ENCODE measurements at regions of chr20 and their contacts with region 1.

Region 1: DNA sequence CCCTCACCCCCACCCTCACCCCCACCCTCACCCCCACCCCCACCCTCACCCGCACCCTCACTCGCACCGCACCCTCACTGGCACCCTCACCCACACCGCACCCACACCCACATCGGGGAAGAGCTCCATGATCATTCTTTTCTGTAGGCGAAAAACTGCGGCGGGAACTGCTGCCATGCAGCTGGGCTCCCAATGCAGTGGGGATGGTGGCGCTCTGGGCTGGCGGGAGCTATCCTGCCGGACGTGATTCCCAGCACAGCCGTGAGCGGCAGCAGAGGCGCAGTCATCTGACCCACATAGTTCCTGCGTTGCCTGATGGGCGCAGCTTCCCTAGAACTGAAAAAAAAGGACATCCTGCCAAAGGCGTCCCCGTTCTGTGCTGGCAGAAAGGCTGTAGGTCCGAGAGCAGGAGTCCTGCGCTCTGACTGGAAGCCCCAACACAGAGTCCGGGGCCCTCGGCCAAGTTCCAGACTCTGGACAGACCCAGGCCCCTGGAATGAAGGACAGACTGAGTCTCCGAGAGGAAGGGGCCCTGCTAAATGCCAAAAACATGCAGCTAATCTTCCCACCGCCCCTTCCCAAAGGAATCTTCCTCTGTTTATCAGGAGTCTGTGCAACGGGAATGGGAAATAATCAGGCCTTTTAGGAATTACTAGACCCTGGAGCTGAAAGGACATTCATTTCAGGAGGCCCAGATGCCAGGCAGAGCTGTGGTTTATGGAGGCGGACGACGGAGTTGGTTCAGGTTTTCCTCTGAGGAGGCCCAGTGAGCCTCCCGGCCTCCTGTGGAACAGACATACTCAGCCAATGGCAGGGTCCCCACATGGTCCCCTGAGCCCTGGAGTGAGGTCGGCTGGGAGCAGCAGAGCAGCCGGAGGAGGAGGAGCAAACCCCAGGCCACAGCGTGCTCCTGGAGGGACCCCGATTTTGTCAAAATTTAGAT is 14.1 kb upstream of the TCFL5 start:
- DNase-seq: peak; percentile 92
- ATAC-seq: peak; percentile 85
- H3K4me3 ChIP-seq: peak overlapping the region; percentile 8 to 53 (median 13); a peak in 5 of 6 replicates
- H3K27ac ChIP-seq: peak overlapping the region; percentile 48
- H3K4me1 ChIP-seq: peaks cover 67% of the 10 kb centered on the region
- H3K27me3 ChIP-seq: peaks cover 0 to 6% of the 10 kb centered on the region in 2 experiments; a peak in 2 of 5 replicates
- CTCF ChIP-seq: peak; percentile 92
- EP300 ChIP-seq: peak in 1 of 2 experiments; percentile 57; a peak in 1 of 4 replicates
- POLR2A ChIP-seq: peak in 1 of 2 experiments; percentile 59; a peak in 2 of 4 replicates
- RAD21 ChIP-seq: peak; percentile 82

Region 2: DNA sequence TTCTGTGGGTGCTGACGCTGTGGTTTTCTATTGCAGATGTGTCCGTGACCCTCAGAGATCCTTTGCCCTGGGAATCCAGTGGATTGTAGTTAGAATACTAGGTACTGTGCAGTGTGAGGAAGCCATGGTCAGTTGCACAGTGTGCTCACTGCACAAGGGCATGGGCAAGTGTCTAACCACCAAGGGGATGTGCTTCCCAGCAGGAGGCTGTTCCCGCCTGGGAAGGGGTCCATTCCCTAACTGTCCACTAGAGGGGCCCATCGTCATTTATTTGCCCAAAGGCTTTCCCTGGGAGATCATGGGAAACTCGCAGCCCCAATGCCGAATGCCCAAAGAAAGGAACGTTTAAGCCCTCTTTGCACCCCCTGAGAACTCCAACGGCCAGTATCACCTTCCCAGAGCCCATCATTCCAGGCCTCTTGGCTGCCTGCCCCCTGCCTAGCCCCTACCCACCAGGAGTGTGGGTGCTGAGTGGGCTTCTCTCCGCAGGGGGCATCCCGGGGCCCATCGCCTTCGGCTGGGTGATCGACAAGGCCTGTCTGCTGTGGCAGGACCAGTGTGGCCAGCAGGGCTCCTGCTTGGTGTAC is 207.2 kb before region 1 on chr20:
- CTCF ChIA-PET with region 1: no interaction called
- POLR2A ChIA-PET with region 1: interaction called, 3 read pairs
- in situ Hi-C with region 1: no loop called
- intact Hi-C with region 1: loop called (anchors 5 kb)
- DNase-seq: peak; percentile 82
- ATAC-seq: peak; percentile 41
- H3K4me3 ChIP-seq: peak overlapping the region in 2 of 3 experiments; percentile 44 to 59; a peak in 3 of 6 replicates
- H3K27ac ChIP-seq: no peak overlapping the region
- H3K4me1 ChIP-seq: peaks cover 61% of the 10 kb centered on the region
- H3K27me3 ChIP-seq: no peaks in the 10 kb centered on the region
- CTCF ChIP-seq: peak; percentile 98
- EP300 ChIP-seq: no peak
- POLR2A ChIP-seq: no peak; a peak in 1 of 4 replicates
- RAD21 ChIP-seq: peak; percentile 93

Region 3: DNA sequence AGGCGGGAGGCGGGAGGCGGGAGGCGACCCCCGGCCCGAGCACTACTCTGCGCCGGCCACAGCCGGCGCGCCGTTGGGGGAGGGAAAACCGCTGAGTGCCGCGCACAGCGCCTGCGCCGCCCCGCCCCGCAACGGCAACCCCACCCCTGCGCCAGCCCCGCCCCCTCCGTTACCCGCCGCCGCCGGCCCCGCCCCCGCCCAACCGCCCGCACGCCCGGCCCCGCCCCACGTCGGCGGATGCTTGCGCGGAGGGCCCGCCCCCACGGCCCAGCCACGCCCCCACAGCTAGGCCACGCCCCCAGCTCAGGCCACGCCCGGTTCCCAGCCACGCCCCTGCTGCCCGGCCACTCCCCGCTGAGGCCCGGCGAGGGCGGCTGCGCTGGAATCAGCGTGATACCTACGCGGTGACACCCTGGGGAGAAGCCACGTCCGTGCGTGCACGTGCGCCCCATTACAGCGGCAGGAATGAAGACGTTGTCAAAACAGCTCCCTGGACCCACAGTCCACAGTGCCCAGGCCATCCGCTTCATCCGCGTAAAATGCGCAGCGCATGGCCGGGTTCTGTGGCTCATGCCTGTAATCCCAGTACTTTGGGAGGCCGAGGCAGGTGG is 13.9 kb before region 1 on chr20 and contains the start of gene TCFL5:
- CTCF ChIA-PET with region 1: no interaction called
- POLR2A ChIA-PET with region 1: interaction called, 37 read pairs
- in situ Hi-C with region 1: no loop called
- intact Hi-C with region 1: no loop called
- DNase-seq: peak; percentile 88
- ATAC-seq: peak; percentile 93
- H3K4me3 ChIP-seq: peak within 1 kb of the TSS; percentile 61 to 83 (median 77)
- H3K27ac ChIP-seq: peak within 1 kb of the TSS; percentile 20
- H3K4me1 ChIP-seq: peaks cover 44% of the 10 kb centered on the region
- H3K27me3 ChIP-seq: peaks cover 0 to 11% of the 10 kb centered on the region in 2 experiments; a peak in 2 of 5 replicates
- CTCF ChIP-seq: no peak; the same call in 1 of the 2 replicates
- EP300 ChIP-seq: peak in 1 of 2 experiments; percentile 39; a peak in 1 of 4 replicates
- POLR2A ChIP-seq: peak; percentile 66 to 78
- RAD21 ChIP-seq: no peak; the same call in 1 of the 2 replicates
- total RNA-seq, gene TCFL5: 20.0 and 21.1 TPM in 2 replicates

Region 4: GRCh38 chr20:62921119-62921687 is 45.5 kb after region 1 on chr20:
- CTCF ChIA-PET with region 1: no interaction called
- POLR2A ChIA-PET with region 1: interaction called, 5 read pairs
- in situ Hi-C with region 1: no loop called
- intact Hi-C with region 1: loop called (anchors 1 kb)
- DNase-seq: peak; percentile 88
- ATAC-seq: peak; percentile 72
- H3K4me3 ChIP-seq: no peak overlapping the region
- H3K27ac ChIP-seq: peak overlapping the region; percentile 9
- H3K4me1 ChIP-seq: peaks cover 75% of the 10 kb centered on the region
- H3K27me3 ChIP-seq: peaks cover 0 to 5% of the 10 kb centered on the region in 2 experiments; a peak in 1 of 5 replicates
- CTCF ChIP-seq: peak; percentile 85
- EP300 ChIP-seq: no peak
- POLR2A ChIP-seq: 0 out of 4 replicates have a peak, but pooled peaks of 1 of the 2 experiments have one; percentile 26
- RAD21 ChIP-seq: peak; percentile 76

Region 5: GRCh38 chr20:63009045-63009961 is 133.6 kb after region 1 on chr20:
- CTCF ChIA-PET with region 1: interaction called, 8 read pairs
- POLR2A ChIA-PET with region 1: no interaction called
- in situ Hi-C with region 1: loop called (anchors 5 kb)
- intact Hi-C with region 1: loop called (anchors 2 kb)
- DNase-seq: peak; percentile 63
- ATAC-seq: peak; percentile 88
- H3K4me3 ChIP-seq: peak overlapping the region in 1 of 3 experiments; percentile 57; a peak in 3 of 6 replicates
- H3K27ac ChIP-seq: no peak overlapping the region
- H3K4me1 ChIP-seq: peaks cover 20% of the 10 kb centered on the region
- H3K27me3 ChIP-seq: peaks cover 31 to 94% of the 10 kb centered on the region in 2 experiments
- CTCF ChIP-seq: peak; percentile 100
- EP300 ChIP-seq: peak in 1 of 2 experiments; percentile 44; a peak in 1 of 4 replicates
- POLR2A ChIP-seq: no peak
- RAD21 ChIP-seq: peak; percentile 99